Astrocyte of the cerebellum (primary cell): ENCODE measurements at regions of chr4 and their contacts with region 1.

Region 1: DNA sequence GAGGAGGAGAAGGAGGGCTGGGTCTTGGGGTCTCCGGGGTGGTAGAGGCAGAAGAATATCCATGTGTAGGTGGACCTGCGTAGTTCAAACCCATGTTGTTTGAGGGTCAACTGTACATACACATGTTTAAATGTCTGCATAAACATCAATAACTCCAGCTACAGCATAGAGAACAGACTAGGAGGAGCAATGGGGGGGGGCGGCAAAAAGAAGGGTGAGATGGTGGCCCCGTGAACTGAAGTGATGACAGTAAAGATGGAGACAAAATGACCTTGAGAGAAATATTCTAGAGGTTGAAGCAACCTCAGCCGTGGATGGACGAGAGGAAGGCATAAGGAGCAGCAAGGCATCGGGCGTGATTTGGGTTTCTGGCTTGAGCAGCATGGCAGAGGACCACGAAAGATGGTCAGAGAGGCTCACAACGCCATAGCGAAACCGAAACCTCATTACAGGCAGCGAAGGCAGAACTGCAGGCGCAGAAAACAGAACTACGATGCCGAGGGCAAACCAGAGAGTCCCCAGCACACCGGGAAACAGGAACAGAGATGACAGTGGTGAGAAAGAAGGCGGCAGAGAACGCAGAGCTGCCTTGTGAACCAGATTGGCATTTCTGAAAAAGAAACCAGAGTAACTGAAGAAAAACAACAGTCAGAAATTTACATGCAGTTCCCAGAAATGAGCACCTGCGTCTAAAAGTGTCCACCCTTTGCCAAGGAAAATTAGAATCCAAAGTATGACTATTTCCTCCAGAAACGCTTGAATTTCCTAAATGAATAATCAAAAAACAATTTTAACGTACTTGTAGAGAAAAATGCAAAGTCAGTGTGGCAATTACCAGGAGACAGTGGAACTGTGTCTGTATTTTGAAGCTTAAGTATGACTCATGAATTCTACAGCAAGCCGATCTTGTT is 50.3 kb upstream of the ENPP6 start:
- DNase-seq: peak; percentile 36
- H3K4me3 ChIP-seq: no peak overlapping the region
- CTCF ChIP-seq: no peak

Region 2: DNA sequence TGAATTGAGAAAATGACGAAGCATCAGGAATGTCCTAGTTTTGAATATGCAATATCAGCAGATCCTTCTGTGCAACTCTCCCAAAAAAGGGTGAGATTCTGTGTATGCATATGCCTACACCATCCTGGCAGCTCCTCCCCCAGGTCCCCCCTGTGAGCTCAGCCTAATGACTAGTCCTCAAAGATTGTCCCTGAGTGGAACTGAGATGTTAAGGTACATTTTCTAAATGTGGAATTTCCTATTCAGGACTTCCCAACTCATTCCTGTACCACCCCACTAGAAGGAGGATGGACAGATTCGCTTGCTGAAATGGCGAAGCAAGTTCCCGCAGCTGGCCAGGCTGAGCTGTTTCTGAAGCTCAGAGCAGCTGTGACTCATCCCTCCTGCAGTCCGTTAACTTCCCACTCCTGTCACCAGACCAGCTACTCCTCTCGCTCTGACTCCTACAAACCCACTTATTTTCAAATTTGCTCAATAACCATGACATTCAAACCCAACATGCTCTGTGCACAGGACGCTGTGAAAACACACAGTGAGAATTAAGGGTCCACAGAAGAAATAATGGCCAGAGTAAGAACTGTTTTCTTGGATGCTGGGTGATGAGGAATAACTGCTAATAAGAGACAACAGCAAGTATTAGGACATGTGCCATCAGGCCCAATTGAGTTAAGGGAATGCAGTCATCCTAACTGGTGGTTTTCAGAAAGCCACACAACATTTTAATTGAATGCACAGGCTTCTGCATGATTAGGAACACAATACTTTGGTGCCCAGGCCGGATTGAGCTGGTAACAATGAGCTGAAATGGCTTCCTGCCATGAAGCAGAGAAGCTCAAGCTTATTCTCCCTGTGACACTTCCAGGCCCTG is 246.4 kb after region 1 on chr4:
- in situ Hi-C with region 1: loop called (anchors 5 kb)
- DNase-seq: peak; percentile 62
- H3K4me3 ChIP-seq: no peak overlapping the region
- CTCF ChIP-seq: no peak